Heart left ventricle (tissue), 16 donors: ENCODE measurements at regions of chr17 and their contacts with region 1.

Region 1: DNA sequence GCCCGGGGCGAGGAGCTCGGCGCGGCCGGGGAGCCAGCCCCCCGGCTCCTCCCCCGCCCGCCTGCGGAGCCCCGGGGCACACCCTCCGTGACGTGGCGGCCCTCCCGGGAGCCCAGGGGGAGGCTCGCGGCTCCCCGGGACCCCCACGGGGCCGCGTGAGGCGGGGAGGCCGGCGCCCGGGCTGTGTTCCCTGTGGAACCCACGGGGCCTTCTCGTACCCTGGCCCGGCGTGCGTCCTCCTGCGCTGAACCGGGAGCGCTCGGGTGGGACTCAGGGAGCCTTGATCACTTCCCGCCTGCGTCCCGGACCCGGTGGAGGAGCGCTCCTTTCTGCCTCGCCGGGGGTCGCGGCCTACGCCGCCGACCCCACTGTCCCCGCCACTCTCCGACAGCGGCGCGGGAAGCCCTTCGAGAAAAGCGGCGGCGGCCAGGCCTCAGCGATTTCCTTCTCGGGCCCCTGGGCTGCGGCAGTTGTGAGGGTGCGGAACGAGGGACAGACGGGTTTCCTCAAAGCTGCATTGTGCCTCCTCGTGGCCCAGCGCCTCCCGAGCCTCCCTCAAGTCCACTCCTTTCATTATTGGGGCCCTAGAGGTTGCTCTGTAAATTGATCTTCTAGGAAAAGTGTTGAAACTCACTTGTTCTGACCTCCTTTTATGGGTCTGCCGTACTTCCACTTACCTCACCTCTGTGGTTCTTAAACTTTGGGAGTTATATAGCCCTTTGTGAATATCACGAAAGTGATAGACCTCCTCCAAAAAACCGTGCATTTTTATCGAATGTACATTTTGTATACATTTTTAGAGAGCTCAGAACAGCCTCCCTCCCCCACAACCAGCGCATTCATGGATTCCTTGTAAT is 597 bp downstream of the LIG3 start:
- DNase-seq: peak; percentile 78 to 89 (median 80)
- ATAC-seq: peak; percentile 65 to 96 (median 92)
- H3K4me3 ChIP-seq: peak overlapping the region; percentile 69 to 98 (median 92)
- H3K27ac ChIP-seq: peak overlapping the region; percentile 95 to 100 (median 98)
- H3K4me1 ChIP-seq: peaks cover 0 to 28% (median 18%) of the 10 kb centered on the region in 12 donors
- H3K27me3 ChIP-seq: no peaks in the 10 kb centered on the region
- CTCF ChIP-seq: peak in 9 of 12 donors; percentile 11 to 56 (median 39)
- POLR2A ChIP-seq: peak in 1 of 2 donors; percentile 42

Region 2: GRCh38 chr17:34703533-34703932 is 277.4 kb before region 1 on chr17:
- intact Hi-C with region 1: no loop called
- DNase-seq: peak in 3 of 5 donors; percentile 21 to 41 (median 25)
- ATAC-seq: no peak
- H3K4me3 ChIP-seq: no peak overlapping the region
- H3K27ac ChIP-seq: no peak overlapping the region
- H3K4me1 ChIP-seq: no peaks in the 10 kb centered on the region
- H3K27me3 ChIP-seq: peaks cover 0 to 12% (median 0%) of the 10 kb centered on the region in 9 donors
- CTCF ChIP-seq: no peak
- POLR2A ChIP-seq: no peak

Region 3: DNA sequence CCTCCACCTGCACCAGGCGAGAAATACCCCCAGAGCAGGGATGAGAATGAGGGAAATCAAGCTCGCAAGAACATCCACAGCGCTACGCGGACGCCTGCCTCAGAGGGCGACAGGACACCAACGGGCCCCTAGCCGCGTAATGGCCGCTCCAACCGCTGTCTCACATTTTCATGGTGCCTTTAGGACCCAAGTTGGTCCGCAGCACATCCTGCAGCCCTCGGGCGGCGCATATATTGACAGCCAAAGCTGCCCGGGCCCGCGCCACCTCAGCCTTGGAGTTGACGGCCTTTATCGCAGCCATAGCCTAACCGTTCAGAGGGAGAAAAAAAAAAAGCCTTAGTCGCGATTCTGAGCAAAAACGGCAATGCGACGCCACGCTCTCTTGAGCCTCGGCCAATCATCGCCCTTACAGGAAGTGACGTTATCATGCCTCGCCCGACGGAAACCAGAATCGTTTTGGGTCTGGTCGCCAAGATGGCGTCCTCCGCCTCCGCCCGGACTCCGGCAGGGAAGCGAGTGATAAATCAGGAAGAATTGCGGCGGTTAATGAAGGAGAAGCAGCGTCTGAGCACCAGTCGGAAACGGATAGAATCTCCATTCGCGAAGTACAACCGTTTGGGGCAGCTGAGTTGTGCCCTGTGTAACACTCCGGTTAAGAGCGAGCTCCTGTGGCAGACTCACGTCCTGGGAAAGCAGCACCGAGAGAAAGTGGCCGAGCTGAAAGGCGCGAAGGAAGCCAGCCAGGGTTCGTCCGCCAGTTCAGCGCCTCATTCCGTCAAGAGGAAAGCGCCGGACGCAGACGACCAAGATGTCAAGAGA is 19.6 kb before region 1 on chr17 and contains the starts of genes CCT6B and ZNF830:
- intact Hi-C with region 1: loop called in 5 of 10 experiments (anchors 1 to 2 kb)
- DNase-seq: peak; percentile 93 to 95 (median 93)
- ATAC-seq: peak; percentile 97 to 99 (median 98)
- H3K4me3 ChIP-seq: peak within 1 kb of the TSS; percentile 46 to 97 (median 88)
- H3K27ac ChIP-seq: peak within 1 kb of the TSS; percentile 90 to 98 (median 96)
- H3K4me1 ChIP-seq: peaks cover 0 to 27% (median 21%) of the 10 kb centered on the region in 12 donors
- H3K27me3 ChIP-seq: no peaks in the 10 kb centered on the region
- CTCF ChIP-seq: peak in 2 of 12 donors; percentile 4 to 5
- POLR2A ChIP-seq: peak in 1 of 2 donors; percentile 58
- total RNA-seq, gene CCT6B: 0.75 to 2.5 (median 1.9) TPM
- total RNA-seq, gene ZNF830: 5.7 to 10.1 (median 7.9) TPM

Region 4: GRCh38 chr17:35022536-35023063 is 41.7 kb after region 1 on chr17:
- intact Hi-C with region 1: loop called in 1 of 10 experiments (anchors 2 kb)
- DNase-seq: peak; percentile 62 to 91 (median 75)
- ATAC-seq: peak; percentile 94 to 97 (median 96)
- H3K4me3 ChIP-seq: no peak overlapping the region
- H3K27ac ChIP-seq: peak overlapping the region; percentile 54 to 88 (median 77)
- H3K4me1 ChIP-seq: peaks cover 0 to 32% (median 14%) of the 10 kb centered on the region in 12 donors
- H3K27me3 ChIP-seq: no peaks in the 10 kb centered on the region
- CTCF ChIP-seq: peak in 2 of 12 donors; percentile 9 to 22
- POLR2A ChIP-seq: no peak

Region 5: DNA sequence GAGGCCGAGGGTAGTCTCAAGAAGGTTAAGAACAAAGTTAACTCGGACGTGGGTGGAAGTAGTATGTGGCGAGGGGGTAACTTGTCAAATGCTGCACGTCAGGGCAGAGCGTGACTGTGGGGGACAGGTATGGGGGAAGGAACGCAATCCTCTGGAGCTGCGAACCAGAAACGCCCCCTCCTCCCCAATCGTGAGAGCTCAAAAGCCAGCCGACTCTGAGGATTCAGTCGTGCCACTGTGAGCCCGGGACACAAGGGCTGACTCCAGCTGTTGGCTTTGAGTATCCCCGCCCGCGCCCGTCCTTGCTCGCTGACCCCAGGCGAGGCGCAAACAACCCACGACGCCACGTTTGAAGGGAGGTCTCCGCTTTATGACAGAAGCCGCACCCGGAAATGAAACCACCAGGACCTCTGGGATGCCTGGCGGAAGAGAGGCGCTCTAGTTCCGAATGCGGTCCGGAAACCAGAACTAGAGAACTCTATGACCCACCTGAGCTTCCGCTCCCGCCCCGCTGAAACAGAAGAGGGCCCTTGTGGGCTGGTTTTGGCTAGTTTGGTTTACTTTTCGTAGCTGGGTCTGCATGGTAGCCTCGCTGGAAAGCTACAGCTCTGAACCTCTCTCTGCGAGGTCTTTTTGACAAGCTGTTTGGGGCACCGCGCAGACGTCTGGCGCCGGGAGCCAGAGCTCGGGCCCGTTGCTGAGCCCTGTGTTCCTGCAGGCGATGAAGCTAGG is 597.5 kb after region 1 on chr17 and contains the start of gene PEX12:
- intact Hi-C with region 1: loop called in 2 of 10 experiments (anchors 10 kb)
- DNase-seq: peak; percentile 91 to 95 (median 93)
- ATAC-seq: peak; percentile 98 to 99 (median 98)
- H3K4me3 ChIP-seq: peak within 1 kb of the TSS; percentile 44 to 93 (median 79)
- H3K27ac ChIP-seq: peak within 1 kb of the TSS; percentile 77 to 96 (median 92)
- H3K4me1 ChIP-seq: peaks cover 0 to 23% (median 17%) of the 10 kb centered on the region in 12 donors
- H3K27me3 ChIP-seq: no peaks in the 10 kb centered on the region
- CTCF ChIP-seq: peak in 2 of 12 donors; percentile 7 to 30
- POLR2A ChIP-seq: peak in 1 of 2 donors; percentile 80
- total RNA-seq, gene PEX12: 6.6 to 10.8 (median 8.8) TPM